Calu3 (cell line): ENCODE measurements at regions of chr3 and their contacts with region 1.

Region 1: DNA sequence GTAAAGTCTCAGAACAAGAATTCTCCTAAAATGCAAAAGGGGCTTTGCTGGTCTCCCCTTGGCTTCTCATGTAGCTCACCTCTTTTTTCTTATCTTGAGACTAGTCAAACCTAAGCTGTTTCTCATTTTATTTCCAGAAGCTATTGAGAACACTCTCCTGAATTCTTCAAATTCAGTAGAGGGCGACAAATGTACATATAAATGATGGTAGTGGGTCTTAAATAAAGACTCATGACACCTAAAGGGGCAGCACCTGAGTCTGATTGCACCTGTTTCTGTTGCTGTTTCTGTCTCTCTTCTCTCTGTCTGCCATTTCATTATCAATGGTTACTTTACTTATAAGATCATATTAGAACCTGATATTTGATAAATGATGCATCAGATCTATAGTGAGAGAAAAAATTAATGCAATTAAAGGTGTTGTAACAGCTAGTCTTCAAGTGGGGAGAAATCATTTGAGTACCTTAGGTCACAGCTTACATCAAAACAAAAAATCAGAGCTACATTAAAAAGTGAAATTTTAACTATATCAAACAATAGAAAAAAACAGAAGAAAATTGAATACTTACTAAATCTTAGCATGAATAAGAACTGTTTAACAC is 7.0 kb downstream of the ADIPOQ start:
- DNase-seq: no peak
- H3K4me3 Mint-ChIP-seq: no peak overlapping the region
- H3K27ac Mint-ChIP-seq: no peak overlapping the region
- H3K4me1 Mint-ChIP-seq: no peaks in the 10 kb centered on the region
- H3K27me3 Mint-ChIP-seq: peaks cover 72% of the 10 kb centered on the region
- CTCF ChIP-seq: no peak

Region 2: GRCh38 chr3:186991470-186991869 is 142.0 kb after region 1 on chr3:
- CTCF ChIA-PET with region 1: no interaction called
- intact Hi-C with region 1: no loop called
- DNase-seq: no peak
- H3K4me3 Mint-ChIP-seq: no peak overlapping the region
- H3K27ac Mint-ChIP-seq: no peak overlapping the region
- H3K4me1 Mint-ChIP-seq: no peaks in the 10 kb centered on the region
- H3K27me3 Mint-ChIP-seq: no peaks in the 10 kb centered on the region
- CTCF ChIP-seq: no peak

Region 3: GRCh38 chr3:187066228-187066995 is 216.9 kb after region 1 on chr3:
- CTCF ChIA-PET with region 1: interaction called, 6 read pairs
- intact Hi-C with region 1: loop called (anchors 2 kb)
- DNase-seq: peak; percentile 51
- H3K4me3 Mint-ChIP-seq: no peak overlapping the region
- H3K27ac Mint-ChIP-seq: no peak overlapping the region
- H3K4me1 Mint-ChIP-seq: peaks cover 27% of the 10 kb centered on the region
- H3K27me3 Mint-ChIP-seq: no peaks in the 10 kb centered on the region
- CTCF ChIP-seq: no peak

Region 4: DNA sequence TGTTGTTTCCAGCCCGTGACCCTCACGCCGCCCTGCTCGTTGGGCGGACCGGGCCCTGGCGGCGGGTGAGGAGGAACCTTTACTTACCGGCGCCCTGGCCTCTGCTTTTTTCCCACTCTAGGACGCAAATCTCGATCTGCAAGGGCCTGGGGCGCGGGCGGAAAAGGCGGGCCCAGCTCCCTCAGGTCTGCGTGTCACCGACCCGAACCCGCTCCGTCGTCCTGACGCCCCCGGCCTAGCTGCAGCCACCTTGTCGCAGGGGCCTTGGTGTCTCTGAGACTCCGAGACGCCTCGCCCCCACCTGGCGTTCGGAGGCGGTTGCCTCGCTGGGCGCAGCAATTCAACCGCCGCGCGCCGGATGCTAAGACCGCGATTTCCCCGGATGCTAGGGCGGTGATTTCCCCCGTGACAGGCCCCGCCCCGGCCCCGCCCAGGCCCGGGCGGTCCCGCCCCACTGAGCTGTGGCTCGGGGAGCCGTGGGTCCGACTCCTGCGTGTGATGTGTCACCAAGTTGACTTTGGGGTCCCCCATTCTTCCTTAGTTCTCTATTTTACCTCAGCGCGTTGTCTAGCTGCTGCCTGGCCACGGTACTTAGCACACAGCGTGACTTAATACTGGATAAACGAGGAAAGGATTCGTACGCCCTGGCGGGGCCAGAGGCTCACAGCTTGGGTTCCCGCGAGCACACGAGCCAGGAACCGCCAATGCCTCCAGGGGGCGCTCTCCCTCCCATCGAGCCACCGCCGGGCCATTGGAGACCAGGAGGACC is 289.8 kb after region 1 on chr3 and contains the start of gene RPL39L:
- CTCF ChIA-PET with region 1: interaction called, 20 read pairs
- intact Hi-C with region 1: no loop called
- DNase-seq: peak; percentile 96
- H3K4me3 Mint-ChIP-seq: peak within 1 kb of the TSS; percentile 84
- H3K27ac Mint-ChIP-seq: peak within 1 kb of the TSS; percentile 69
- H3K4me1 Mint-ChIP-seq: no peaks in the 10 kb centered on the region
- H3K27me3 Mint-ChIP-seq: no peaks in the 10 kb centered on the region
- CTCF ChIP-seq: peak; percentile 99
- total RNA-seq, gene RPL39L: 27.2 and 31.8 TPM in 2 replicates

Region 5: GRCh38 chr3:187164885-187165543 is 315.5 kb after region 1 on chr3:
- CTCF ChIA-PET with region 1: interaction called, 63 read pairs
- intact Hi-C with region 1: loop called (anchors 1 kb)
- DNase-seq: peak; percentile 65
- H3K4me3 Mint-ChIP-seq: no peak overlapping the region
- H3K27ac Mint-ChIP-seq: no peak overlapping the region
- H3K4me1 Mint-ChIP-seq: peaks cover 23% of the 10 kb centered on the region
- H3K27me3 Mint-ChIP-seq: peaks cover 26% of the 10 kb centered on the region
- CTCF ChIP-seq: peak; percentile 65